Panc1 (cell line): ENCODE measurements at regions of chr19 and their contacts with region 1.

Region 1: GRCh38 chr19:21147540-21147939 is 5.7 kb downstream of the ZNF431 start:
- DNase-seq: no peak
- ATAC-seq: no peak
- H3K4me3 ChIP-seq: no peak overlapping the region
- H3K27ac ChIP-seq: no peak overlapping the region
- H3K4me1 ChIP-seq: peaks cover 2% of the 10 kb centered on the region; the same call in 1 of the 2 replicates
- H3K27me3 ChIP-seq: no peaks in the 10 kb centered on the region
- CTCF ChIP-seq: no peak

Region 2: GRCh38 chr19:21087871-21088270 is 59.7 kb before region 1 on chr19:
- CTCF ChIA-PET with region 1: no interaction called
- POLR2A ChIA-PET with region 1: no interaction called
- in situ Hi-C with region 1: loop called (anchors 5 kb)
- intact Hi-C with region 1: no loop called
- DNase-seq: no peak
- ATAC-seq: no peak
- H3K4me3 ChIP-seq: no peak overlapping the region
- H3K27ac ChIP-seq: no peak overlapping the region
- H3K4me1 ChIP-seq: no peaks in the 10 kb centered on the region
- H3K27me3 ChIP-seq: no peaks in the 10 kb centered on the region
- CTCF ChIP-seq: no peak